PC-9 (cell line): ENCODE measurements at regions of chr11 and their contacts with region 1.

Region 1: GRCh38 chr11:120511116-120511819 is at the start of gene GRIK4:
- DNase-seq: peak; percentile 56 to 74
- H3K4me3 ChIP-seq: peak within 1 kb of the TSS; percentile 44; the same call in 1 of the 2 replicates
- H3K27ac ChIP-seq: no peak within 1 kb of the TSS
- H3K4me1 ChIP-seq: no peaks in the 10 kb centered on the region
- H3K27me3 ChIP-seq: peaks cover 72% of the 10 kb centered on the region
- CTCF ChIP-seq: peak; percentile 97
- total RNA-seq, gene GRIK4: not detected in 2 replicates

Region 2: DNA sequence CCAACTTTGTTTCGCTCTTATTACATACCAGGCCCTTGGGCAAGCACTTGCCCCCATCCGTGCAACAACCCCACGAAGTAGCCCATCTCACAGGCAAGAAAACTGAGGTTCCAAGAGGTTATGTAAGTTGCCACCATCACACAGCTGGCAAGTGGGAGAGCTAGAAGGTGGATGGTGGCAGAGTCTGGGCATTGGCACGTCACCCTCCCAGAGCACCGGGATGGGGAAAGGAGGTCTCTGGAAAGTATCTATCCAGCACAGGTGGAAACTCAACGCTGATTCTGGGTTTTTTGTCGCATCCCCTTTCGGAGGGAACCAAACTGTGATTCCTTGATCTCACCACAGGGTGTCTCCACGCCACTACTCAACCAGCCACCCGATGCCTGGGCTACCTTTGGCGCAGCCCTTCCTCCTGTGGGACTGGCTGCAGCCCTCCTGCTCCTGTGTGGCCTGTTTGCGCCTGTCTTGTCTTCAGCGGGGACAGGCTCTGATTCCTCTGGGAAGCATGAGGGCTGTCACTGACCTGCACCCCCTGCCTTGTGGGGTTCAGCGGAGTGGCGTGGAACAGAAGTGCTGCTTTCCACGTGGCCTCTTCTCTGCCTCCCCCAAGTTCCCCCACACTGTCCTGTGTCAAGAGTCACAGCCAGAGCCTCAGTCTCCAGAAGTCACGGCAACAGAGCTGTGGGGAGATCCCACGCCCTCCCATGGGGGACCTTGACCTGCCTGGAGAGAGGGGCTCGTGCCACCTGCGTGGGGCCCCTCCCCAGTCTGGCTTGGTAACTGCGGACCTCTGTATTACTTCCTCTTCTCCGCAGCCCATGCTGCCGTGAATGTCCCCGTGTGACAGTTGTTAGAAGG is 339.0 kb before region 1 on chr11:
- CTCF ChIA-PET with region 1: no interaction called
- POLR2A ChIA-PET with region 1: no interaction called
- intact Hi-C with region 1: loop called (anchors 5 kb)
- DNase-seq: peak; percentile 63 to 68
- H3K4me3 ChIP-seq: no peak overlapping the region
- H3K27ac ChIP-seq: no peak overlapping the region
- H3K4me1 ChIP-seq: no peaks in the 10 kb centered on the region
- H3K27me3 ChIP-seq: peaks cover 21% of the 10 kb centered on the region
- CTCF ChIP-seq: peak; percentile 94

Region 3: GRCh38 chr11:120622189-120622875 is 111.1 kb after region 1 on chr11:
- CTCF ChIA-PET with region 1: no interaction called
- POLR2A ChIA-PET with region 1: no interaction called
- intact Hi-C with region 1: no loop called
- DNase-seq: no peak
- H3K4me3 ChIP-seq: no peak overlapping the region
- H3K27ac ChIP-seq: no peak overlapping the region
- H3K4me1 ChIP-seq: no peaks in the 10 kb centered on the region
- H3K27me3 ChIP-seq: peaks cover 92% of the 10 kb centered on the region
- CTCF ChIP-seq: peak; percentile 45

Region 4: GRCh38 chr11:120682866-120683265 is 171.6 kb after region 1 on chr11:
- CTCF ChIA-PET with region 1: interaction called, 15 read pairs
- POLR2A ChIA-PET with region 1: no interaction called
- intact Hi-C with region 1: loop called (anchors 1 kb)
- DNase-seq: no peak
- H3K4me3 ChIP-seq: no peak overlapping the region
- H3K27ac ChIP-seq: no peak overlapping the region
- H3K4me1 ChIP-seq: no peaks in the 10 kb centered on the region
- H3K27me3 ChIP-seq: peaks cover 95% of the 10 kb centered on the region
- CTCF ChIP-seq: no peak

Region 5: GRCh38 chr11:120839846-120840402 is 328.7 kb after region 1 on chr11:
- CTCF ChIA-PET with region 1: no interaction called
- POLR2A ChIA-PET with region 1: interaction called, 12 read pairs
- intact Hi-C with region 1: no loop called
- DNase-seq: no peak
- H3K4me3 ChIP-seq: no peak overlapping the region
- H3K27ac ChIP-seq: no peak overlapping the region
- H3K4me1 ChIP-seq: no peaks in the 10 kb centered on the region
- H3K27me3 ChIP-seq: no peaks in the 10 kb centered on the region
- CTCF ChIP-seq: no peak

Region 6: DNA sequence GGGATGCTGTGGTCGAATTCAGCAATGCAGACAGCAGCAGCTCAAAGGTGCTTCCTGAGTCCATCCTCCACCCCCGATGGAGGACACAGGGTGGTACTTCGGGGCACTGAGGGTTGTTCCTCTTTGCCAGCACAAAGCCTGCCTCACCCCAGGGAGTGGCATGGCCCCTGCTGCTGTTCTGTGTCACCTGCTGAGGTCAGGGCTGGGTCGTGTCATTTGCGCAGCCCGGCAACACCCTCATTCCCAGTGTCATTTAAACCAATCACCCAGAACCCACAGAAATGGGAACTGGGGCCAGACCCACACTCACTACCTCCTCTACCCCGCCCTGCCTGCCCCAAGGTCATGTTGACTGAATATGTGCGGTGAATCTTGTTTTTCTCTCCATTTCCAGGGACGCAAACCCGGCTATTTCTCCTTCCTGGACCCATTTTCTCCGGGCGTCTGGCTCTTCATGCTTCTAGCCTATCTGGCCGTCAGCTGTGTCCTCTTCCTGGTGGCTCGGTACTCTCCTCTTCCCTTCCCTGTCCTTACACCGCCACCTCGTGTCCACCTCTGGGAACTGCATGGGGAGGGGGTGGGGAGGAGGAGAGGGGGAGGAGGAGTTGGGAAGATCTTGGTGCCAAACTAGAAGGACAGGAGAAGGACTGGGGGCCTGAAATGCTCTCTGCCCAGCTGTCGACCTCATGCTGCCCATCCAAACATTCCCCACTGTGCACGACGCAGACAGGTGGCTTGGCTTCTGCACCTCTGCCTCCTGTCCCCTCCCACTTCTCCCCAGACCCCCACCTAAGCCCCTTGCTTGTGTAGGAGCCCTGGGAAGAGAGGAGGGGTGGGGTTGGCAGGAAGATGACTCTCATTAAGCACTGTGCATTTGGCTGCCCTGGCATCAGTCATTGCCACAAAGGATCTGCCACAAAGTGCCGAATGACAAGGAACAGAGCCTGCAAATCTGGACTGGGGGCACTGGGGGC is 441.5 kb after region 1 on chr11:
- CTCF ChIA-PET with region 1: no interaction called
- POLR2A ChIA-PET with region 1: no interaction called
- intact Hi-C with region 1: no loop called
- DNase-seq: peak; percentile 60 to 61
- H3K4me3 ChIP-seq: peak overlapping the region; percentile 7; the same call in 1 of the 2 replicates
- H3K27ac ChIP-seq: no peak overlapping the region
- H3K4me1 ChIP-seq: 0 out of 2 replicates have a peak, but pooled peaks cover 4% of the 10 kb centered on the region
- H3K27me3 ChIP-seq: peaks cover 60% of the 10 kb centered on the region
- CTCF ChIP-seq: peak; percentile 99

Region 7: GRCh38 chr11:121194731-121195596 is 683.7 kb after region 1 on chr11:
- CTCF ChIA-PET with region 1: no interaction called
- POLR2A ChIA-PET with region 1: no interaction called
- intact Hi-C with region 1: loop called (anchors 5 kb)
- DNase-seq: peak in 1 of 2 experiments; percentile 29
- H3K4me3 ChIP-seq: no peak overlapping the region
- H3K27ac ChIP-seq: no peak overlapping the region
- H3K4me1 ChIP-seq: no peaks in the 10 kb centered on the region
- H3K27me3 ChIP-seq: peaks cover 97% of the 10 kb centered on the region
- CTCF ChIP-seq: peak; percentile 97